ENCODE measurements at regions of chr20 and their contacts with region 1.

Region 1: GRCh38 chr20:58179432-58180099 is 48.9 kb downstream of the ANKRD60 start:
- DNase-seq: peak in 1 of 2 donors; percentile 74
- H3K4me3 ChIP-seq: peak overlapping the region; percentile 46 to 61
- H3K27ac ChIP-seq: no peak overlapping the region
- H3K4me1 ChIP-seq: peaks cover 4 to 21% of the 10 kb centered on the region in 2 donors
- H3K27me3 ChIP-seq: no peaks in the 10 kb centered on the region
- CTCF ChIP-seq: peak; percentile 97 to 100 (median 99)

Region 2: GRCh38 chr20:57622579-57623377 is 556.8 kb before region 1 on chr20:
- intact Hi-C with region 1: loop called (anchors 1 kb)
- DNase-seq: no peak
- H3K4me3 ChIP-seq: no peak overlapping the region
- H3K27ac ChIP-seq: no peak overlapping the region
- H3K4me1 ChIP-seq: no peaks in the 10 kb centered on the region
- H3K27me3 ChIP-seq: no peaks in the 10 kb centered on the region
- CTCF ChIP-seq: peak; percentile 57 to 75 (median 64)

Region 3: GRCh38 chr20:57709931-57710799 is 469.4 kb before region 1 on chr20 and contains the start of gene PMEPA1:
- intact Hi-C with region 1: loop called (anchors 2 kb)
- DNase-seq: peak; percentile 81 to 97
- H3K4me3 ChIP-seq: peak within 1 kb of the TSS; percentile 73 to 79
- H3K27ac ChIP-seq: peak within 1 kb of the TSS; percentile 94 to 97
- H3K4me1 ChIP-seq: peaks cover 23 to 50% of the 10 kb centered on the region in 2 donors
- H3K27me3 ChIP-seq: no peaks in the 10 kb centered on the region
- CTCF ChIP-seq: no peak
- total RNA-seq, gene PMEPA1: 56.8 TPM

Region 4: GRCh38 chr20:57999465-58000111 is 180.0 kb before region 1 on chr20:
- intact Hi-C with region 1: loop called (anchors 5 kb)
- DNase-seq: no peak
- H3K4me3 ChIP-seq: peak overlapping the region; percentile 7 to 48
- H3K27ac ChIP-seq: peak overlapping the region in 1 of 2 donors; percentile 28
- H3K4me1 ChIP-seq: peaks cover 5 to 26% of the 10 kb centered on the region in 2 donors
- H3K27me3 ChIP-seq: no peaks in the 10 kb centered on the region
- CTCF ChIP-seq: no peak

Region 5: GRCh38 chr20:58112017-58112781 is 67.4 kb before region 1 on chr20:
- intact Hi-C with region 1: loop called (anchors 2 kb)
- DNase-seq: no peak
- H3K4me3 ChIP-seq: no peak overlapping the region
- H3K27ac ChIP-seq: peak overlapping the region; percentile 35 to 63
- H3K4me1 ChIP-seq: peaks cover 3 to 14% of the 10 kb centered on the region in 2 donors
- H3K27me3 ChIP-seq: no peaks in the 10 kb centered on the region
- CTCF ChIP-seq: no peak

Region 6: DNA sequence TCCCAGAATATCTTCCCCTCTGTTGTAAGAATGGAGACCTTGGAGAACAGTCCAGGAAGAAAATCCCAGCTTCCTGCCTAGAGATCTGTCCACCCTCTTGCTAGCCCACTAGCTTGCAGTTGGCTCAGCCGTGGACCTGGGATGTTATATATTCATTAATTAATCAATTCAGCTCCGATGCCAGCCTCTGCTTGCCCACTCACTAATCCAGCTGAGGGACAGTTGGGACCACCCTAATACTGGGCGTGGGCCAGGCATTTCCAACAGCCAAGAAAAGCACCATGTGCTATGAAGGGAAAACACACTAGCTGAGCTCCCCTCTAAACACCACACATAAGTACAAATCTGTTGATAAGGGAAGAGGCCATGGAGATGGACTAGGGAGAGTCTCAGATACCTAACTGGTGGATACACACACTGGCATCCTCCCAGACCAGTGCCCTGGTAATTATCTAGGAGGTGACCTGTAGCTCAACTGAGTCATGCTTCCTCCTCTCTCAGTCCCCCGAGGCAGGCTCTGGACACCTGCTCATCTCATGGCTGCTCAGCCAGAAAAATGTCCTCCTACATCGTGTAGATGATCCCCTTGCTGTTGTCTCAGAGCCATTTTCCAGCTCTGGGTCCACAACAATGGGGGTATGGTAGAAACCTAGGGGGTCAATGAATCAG is 30.0 kb before region 1 on chr20:
- intact Hi-C with region 1: loop called (anchors 1 kb)
- DNase-seq: no peak
- H3K4me3 ChIP-seq: no peak overlapping the region
- H3K27ac ChIP-seq: peak overlapping the region; percentile 65 to 93
- H3K4me1 ChIP-seq: peaks cover 14 to 46% of the 10 kb centered on the region in 2 donors
- H3K27me3 ChIP-seq: no peaks in the 10 kb centered on the region
- CTCF ChIP-seq: no peak

Region 7: DNA sequence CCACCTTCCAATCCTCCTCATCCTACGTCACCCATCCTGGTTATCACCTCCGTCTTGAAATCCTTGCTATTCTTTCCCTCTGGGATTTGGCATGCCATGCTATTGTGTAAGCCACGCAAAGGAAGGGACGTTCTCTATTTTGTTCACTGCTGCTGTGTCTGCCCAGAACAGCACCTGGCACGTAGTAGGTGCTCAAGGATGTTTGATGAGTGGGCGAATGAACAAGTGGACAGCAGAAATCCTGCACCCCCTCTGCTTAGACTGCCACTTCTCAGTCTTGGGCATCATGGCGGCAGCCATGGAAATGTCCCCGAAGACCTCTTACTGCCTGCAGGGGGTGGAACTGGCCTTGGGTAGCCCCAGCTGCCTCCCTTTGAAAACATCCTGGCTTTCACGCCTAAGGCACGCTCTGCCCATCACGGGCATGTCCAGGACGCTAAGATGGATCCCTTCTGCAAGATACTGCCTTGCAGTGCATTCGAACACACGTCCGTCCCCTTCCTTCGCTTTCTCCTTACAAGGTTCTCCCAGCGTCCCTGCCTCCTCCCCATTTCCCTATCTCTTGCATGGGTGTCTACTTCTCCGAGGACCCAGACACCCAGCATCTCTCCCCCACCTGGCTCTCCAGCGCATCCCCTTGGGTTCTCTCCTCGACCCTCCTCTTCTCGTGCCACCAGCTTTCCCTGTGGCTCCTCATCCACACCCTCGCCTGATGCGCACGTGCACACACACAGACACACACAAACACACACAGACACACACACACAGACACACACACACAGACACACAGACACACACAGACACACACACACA is 16.6 kb after region 1 on chr20:
- intact Hi-C with region 1: no loop called
- DNase-seq: no peak
- H3K4me3 ChIP-seq: no peak overlapping the region
- H3K27ac ChIP-seq: no peak overlapping the region
- H3K4me1 ChIP-seq: no peaks in the 10 kb centered on the region
- H3K27me3 ChIP-seq: no peaks in the 10 kb centered on the region
- CTCF ChIP-seq: no peak